Activated CD4-positive, alpha-beta T cell treated with anti-CD3 and anti-CD28 coated beads for 36 hours (primary cell): ENCODE measurements at regions of chr15 and their contacts with region 1.

Region 1: GRCh38 chr15:70121624-70122297 is 24.0 kb upstream of the TLE3 start:
- DNase-seq: no peak
- ATAC-seq: no peak
- H3K4me3 Mint-ChIP-seq: no peak overlapping the region
- H3K27ac Mint-ChIP-seq: no peak overlapping the region
- H3K4me1 Mint-ChIP-seq: no peaks in the 10 kb centered on the region
- H3K27me3 Mint-ChIP-seq: peaks cover 3% of the 10 kb centered on the region

Region 2: DNA sequence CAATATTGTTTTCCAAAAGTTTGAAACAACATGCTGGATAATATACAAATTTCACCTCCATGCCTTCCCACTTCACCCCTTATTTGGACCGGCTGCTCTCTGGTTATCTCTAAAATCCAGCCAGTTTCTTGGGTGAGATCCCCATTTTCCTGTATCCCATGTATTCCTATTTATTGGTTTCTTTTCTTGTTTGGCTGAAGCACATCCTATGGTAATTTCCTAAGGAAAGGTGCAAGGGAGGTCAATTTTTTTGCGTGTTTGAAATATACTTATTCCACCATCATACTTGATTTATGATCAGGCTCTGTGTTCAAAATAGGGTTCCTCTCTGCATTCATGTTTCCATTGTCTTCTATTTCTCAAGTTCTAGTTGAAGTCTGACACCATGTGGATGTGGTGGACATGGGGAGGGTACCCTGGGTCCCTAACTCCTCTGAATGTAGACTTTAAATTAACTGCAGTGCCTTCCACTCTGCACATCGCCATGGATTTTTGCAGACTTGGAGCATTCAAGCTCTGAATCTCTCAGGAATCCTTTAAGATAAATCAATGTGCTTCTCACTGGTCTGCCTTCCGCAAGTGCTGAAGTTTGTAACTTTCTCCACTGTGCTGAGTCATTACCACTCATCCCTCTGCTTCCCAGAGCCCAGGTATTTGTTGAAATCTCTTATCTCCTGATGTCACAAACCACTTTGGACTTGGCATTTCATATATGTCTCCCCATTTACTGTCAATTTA is 28.1 kb after region 1 on chr15:
- CTCF ChIA-PET with region 1: no interaction called
- POLR2A ChIA-PET with region 1: no interaction called
- intact Hi-C with region 1: loop called in 1 of 2 experiments (anchors 2 kb)
- DNase-seq: no peak
- ATAC-seq: no peak
- H3K4me3 Mint-ChIP-seq: no peak overlapping the region
- H3K27ac Mint-ChIP-seq: no peak overlapping the region
- H3K4me1 Mint-ChIP-seq: no peaks in the 10 kb centered on the region
- H3K27me3 Mint-ChIP-seq: peaks cover 8% of the 10 kb centered on the region